Endothelial cell of umbilical vein (primary cell): ENCODE measurements at regions of chr12 and their contacts with region 1.

Region 1: DNA sequence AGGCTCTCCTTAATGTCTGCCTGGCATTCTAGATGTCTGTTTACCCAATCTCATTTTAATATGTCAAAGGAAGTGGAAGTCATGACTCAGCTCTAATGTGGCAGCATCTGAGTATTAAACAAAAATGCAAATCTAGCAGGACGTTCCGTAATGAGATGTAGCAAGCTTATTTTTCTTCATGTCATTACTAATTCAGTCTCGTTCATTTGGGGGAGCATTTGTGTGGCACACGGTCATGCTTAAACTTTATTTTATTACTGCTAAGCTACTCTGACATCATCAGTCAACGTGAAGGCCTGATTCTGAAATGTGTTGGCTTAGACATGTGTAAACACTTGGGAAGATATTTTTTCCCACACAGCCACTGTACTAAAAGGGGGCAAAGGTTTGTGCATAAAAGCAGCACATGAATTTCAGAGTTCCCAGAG is 326.7 kb upstream of the TMPO start:
- DNase-seq: peak; percentile 75
- H3K4me3 ChIP-seq: no peak overlapping the region
- H3K27ac ChIP-seq: no peak overlapping the region
- H3K4me1 ChIP-seq: peaks cover 8% of the 10 kb centered on the region
- H3K27me3 ChIP-seq: no peaks in the 10 kb centered on the region
- CTCF ChIP-seq: no peak
- POLR2A ChIP-seq: no peak

Region 2: DNA sequence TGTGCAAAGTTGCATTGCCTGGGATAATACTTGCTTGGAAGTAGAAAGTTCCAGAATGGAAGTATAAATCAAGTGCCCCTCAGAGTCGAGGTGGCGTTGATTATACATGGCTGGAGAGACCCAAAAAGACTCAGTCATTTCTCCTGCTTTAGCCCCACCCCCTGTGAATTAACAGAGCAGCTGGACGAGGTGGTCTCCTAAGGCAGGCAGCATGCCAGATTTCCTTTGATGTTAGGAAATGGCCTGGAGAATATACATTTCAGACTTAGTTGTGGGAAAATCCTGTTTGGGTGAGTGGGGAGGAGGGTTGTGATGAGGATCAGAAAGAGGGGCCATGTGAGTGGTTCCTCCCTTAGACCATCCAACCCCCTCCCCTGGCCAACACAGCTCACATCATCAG is 79.4 kb before region 1 on chr12:
- CTCF ChIA-PET with region 1: no interaction called
- POLR2A ChIA-PET with region 1: no interaction called
- dilution Hi-C with region 1: no loop called
- intact Hi-C with region 1: no loop called
- DNase-seq: no peak
- H3K4me3 ChIP-seq: no peak overlapping the region
- H3K27ac ChIP-seq: no peak overlapping the region
- H3K4me1 ChIP-seq: no peaks in the 10 kb centered on the region
- H3K27me3 ChIP-seq: no peaks in the 10 kb centered on the region
- CTCF ChIP-seq: no peak
- POLR2A ChIP-seq: no peak

Region 3: GRCh38 chr12:100168586-100168985 is 1979.9 kb after region 1 on chr12:
- CTCF ChIA-PET with region 1: no interaction called
- POLR2A ChIA-PET with region 1: no interaction called
- dilution Hi-C with region 1: no loop called
- intact Hi-C with region 1: loop called (anchors 5 kb)
- DNase-seq: no peak
- H3K4me3 ChIP-seq: no peak overlapping the region
- H3K27ac ChIP-seq: no peak overlapping the region
- H3K4me1 ChIP-seq: no peaks in the 10 kb centered on the region
- H3K27me3 ChIP-seq: no peaks in the 10 kb centered on the region
- CTCF ChIP-seq: no peak
- POLR2A ChIP-seq: no peak